ENCODE measurements at regions of chr16 and their contacts with region 1.

Region 1: GRCh38 chr16:24626256-24626655 is 86.9 kb downstream of the RBBP6 start:
- DNase-seq: peak in 1 of 2 experiments; percentile 71
- H3K4me3 ChIP-seq: no peak overlapping the region
- H3K27ac ChIP-seq: peak overlapping the region; percentile 52
- H3K4me1 ChIP-seq: peaks cover 12% of the 10 kb centered on the region
- H3K27me3 ChIP-seq: no peaks in the 10 kb centered on the region
- CTCF ChIP-seq: no peak

Region 2: GRCh38 chr16:24577167-24577566 is 49.1 kb before region 1 on chr16:
- CTCF ChIA-PET with region 1: no interaction called
- POLR2A ChIA-PET with region 1: no interaction called
- intact Hi-C with region 1: no loop called
- DNase-seq: no peak
- H3K4me3 ChIP-seq: no peak overlapping the region
- H3K27ac ChIP-seq: no peak overlapping the region
- H3K4me1 ChIP-seq: no peaks in the 10 kb centered on the region
- H3K27me3 ChIP-seq: no peaks in the 10 kb centered on the region
- CTCF ChIP-seq: no peak

Region 3: GRCh38 chr16:24589997-24590396 is 36.3 kb before region 1 on chr16:
- CTCF ChIA-PET with region 1: interaction called, 11 read pairs
- POLR2A ChIA-PET with region 1: no interaction called
- intact Hi-C with region 1: no loop called
- DNase-seq: no peak
- H3K4me3 ChIP-seq: no peak overlapping the region
- H3K27ac ChIP-seq: no peak overlapping the region
- H3K4me1 ChIP-seq: peaks cover 13% of the 10 kb centered on the region
- H3K27me3 ChIP-seq: no peaks in the 10 kb centered on the region
- CTCF ChIP-seq: no peak

Region 4: GRCh38 chr16:24677388-24677787 is 51.1 kb after region 1 on chr16:
- CTCF ChIA-PET with region 1: no interaction called
- POLR2A ChIA-PET with region 1: no interaction called
- intact Hi-C with region 1: no loop called
- DNase-seq: no peak
- H3K4me3 ChIP-seq: no peak overlapping the region
- H3K27ac ChIP-seq: no peak overlapping the region
- H3K4me1 ChIP-seq: peaks cover 18% of the 10 kb centered on the region
- H3K27me3 ChIP-seq: no peaks in the 10 kb centered on the region
- CTCF ChIP-seq: no peak

Region 5: GRCh38 chr16:24700549-24701392 is 74.5 kb after region 1 on chr16:
- CTCF ChIA-PET with region 1: no interaction called
- POLR2A ChIA-PET with region 1: no interaction called
- intact Hi-C with region 1: no loop called
- DNase-seq: peak; percentile 90 to 95
- H3K4me3 ChIP-seq: peak overlapping the region; percentile 36; the same call in 1 of the 2 replicates
- H3K27ac ChIP-seq: peak overlapping the region; percentile 91
- H3K4me1 ChIP-seq: peaks cover 34% of the 10 kb centered on the region
- H3K27me3 ChIP-seq: no peaks in the 10 kb centered on the region
- CTCF ChIP-seq: peak; percentile 47

Region 6: DNA sequence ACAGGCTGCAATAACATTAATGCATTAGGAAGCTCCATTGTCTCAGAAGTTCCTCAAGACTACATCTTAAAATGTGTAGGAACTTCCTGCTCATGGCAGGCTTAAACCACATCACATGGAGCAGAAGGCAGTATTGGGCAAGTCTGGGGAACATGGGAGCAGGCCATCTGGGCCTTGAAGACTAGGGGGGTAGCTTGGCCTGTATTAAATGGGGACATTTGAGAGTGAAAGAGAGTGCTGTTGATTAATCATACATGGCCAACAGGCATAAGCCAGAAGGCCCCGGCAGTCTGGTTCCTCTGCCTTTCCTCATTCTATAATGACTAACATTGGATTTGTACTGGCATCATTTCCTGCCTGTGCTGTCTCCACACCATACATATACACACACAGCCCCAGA is 194.3 kb after region 1 on chr16:
- CTCF ChIA-PET with region 1: no interaction called
- POLR2A ChIA-PET with region 1: no interaction called
- intact Hi-C with region 1: no loop called
- DNase-seq: no peak
- H3K4me3 ChIP-seq: no peak overlapping the region
- H3K27ac ChIP-seq: no peak overlapping the region
- H3K4me1 ChIP-seq: no peaks in the 10 kb centered on the region
- H3K27me3 ChIP-seq: no peaks in the 10 kb centered on the region
- CTCF ChIP-seq: no peak